ENCODE measurements at regions of chr1 and their contacts with region 1.

Region 1: GRCh38 chr1:160006312-160006940 is 25.4 kb downstream of the PIGM start:
- DNase-seq: peak; percentile 46 to 78
- H3K4me3 ChIP-seq: no peak overlapping the region
- H3K27ac ChIP-seq: no peak overlapping the region
- H3K4me1 ChIP-seq: no peaks in the 10 kb centered on the region
- H3K27me3 ChIP-seq: no peaks in the 10 kb centered on the region
- CTCF ChIP-seq: peak; percentile 94 to 97 (median 94)
- EP300 ChIP-seq: no peak
- POLR2A ChIP-seq: no peak
- RAD21 ChIP-seq: peak; percentile 84 to 87

Region 2: DNA sequence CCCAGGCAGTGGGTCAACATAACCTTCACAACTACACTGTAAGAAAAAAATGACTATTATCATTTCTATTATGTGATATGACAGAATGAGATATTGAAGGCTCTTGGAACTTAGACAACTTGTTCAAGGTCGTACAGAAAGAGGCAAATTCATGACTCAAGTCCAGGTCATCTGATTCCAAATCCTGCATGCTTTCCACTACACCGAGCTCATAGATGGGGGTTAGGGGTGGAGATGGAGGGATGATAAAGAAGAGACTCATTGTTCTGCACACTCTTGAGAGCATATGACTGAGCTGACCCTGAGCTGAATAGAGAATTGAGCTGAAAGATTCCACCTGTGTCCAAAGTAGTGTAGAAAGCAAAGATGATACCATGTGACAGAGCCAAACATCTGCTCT is 201.5 kb before region 1 on chr1:
- CTCF ChIA-PET with region 1: interaction called, 51 read pairs
- POLR2A ChIA-PET with region 1: no interaction called
- DNase-seq: no peak
- H3K4me3 ChIP-seq: no peak overlapping the region
- H3K27ac ChIP-seq: no peak overlapping the region
- H3K4me1 ChIP-seq: no peaks in the 10 kb centered on the region
- H3K27me3 ChIP-seq: no peaks in the 10 kb centered on the region
- CTCF ChIP-seq: no peak
- EP300 ChIP-seq: no peak
- POLR2A ChIP-seq: no peak
- RAD21 ChIP-seq: no peak

Region 3: GRCh38 chr1:159860426-159860825 is 146.0 kb before region 1 on chr1:
- CTCF ChIA-PET with region 1: interaction called, 10 read pairs
- POLR2A ChIA-PET with region 1: no interaction called
- DNase-seq: no peak
- H3K4me3 ChIP-seq: no peak overlapping the region
- H3K27ac ChIP-seq: no peak overlapping the region
- H3K4me1 ChIP-seq: peaks cover 0 to 2% (median 0%) of the 10 kb centered on the region in 4 experiments; a peak in 2 of 7 replicates
- H3K27me3 ChIP-seq: peaks cover 0 to 11% (median 8%) of the 10 kb centered on the region in 4 experiments; a peak in 6 of 7 replicates
- CTCF ChIP-seq: no peak
- EP300 ChIP-seq: no peak
- POLR2A ChIP-seq: no peak
- RAD21 ChIP-seq: no peak

Region 4: DNA sequence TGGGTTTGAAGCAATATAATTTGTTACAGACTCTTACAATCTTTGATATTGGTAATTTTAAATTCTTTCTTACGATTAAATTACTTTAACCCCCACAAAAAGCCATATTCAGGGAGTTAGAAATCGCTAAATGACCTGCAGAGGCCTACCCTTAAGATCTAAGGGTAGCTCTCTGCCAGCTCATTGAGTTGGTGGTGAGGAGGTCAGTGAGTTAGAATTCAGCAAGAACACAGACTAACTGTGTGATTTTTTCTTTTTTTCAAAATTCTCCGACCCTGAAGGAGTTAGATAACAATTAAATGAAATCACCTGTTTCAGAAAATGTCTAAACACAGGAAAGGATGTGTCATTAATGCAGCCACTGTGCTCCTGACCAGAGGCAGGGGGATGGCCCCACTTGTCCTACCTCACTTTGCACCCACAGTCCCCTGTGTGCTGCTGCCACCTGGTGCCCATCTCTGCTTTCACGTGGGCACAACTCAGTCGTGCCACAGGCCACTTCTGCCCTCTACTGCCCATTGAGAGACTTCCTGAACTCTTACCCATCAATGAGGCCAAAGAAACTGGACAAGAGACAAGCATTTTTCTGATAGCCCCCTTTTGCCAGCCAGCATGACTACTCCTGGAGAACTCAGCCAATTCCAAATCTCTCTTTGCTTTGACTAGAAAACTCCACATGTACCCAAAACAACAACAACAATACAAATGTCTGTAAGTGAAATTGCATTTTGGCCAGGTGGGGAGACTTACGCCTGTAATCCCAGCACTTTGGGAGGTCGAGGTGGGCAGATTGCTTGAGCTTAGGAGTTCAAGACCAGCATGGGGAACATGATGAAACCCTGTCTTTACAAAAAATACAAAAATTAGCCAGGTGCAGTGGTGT is 114.9 kb before region 1 on chr1:
- CTCF ChIA-PET with region 1: interaction called, 177 read pairs
- POLR2A ChIA-PET with region 1: no interaction called
- DNase-seq: peak; percentile 66 to 77
- H3K4me3 ChIP-seq: no peak overlapping the region
- H3K27ac ChIP-seq: no peak overlapping the region
- H3K4me1 ChIP-seq: no peaks in the 10 kb centered on the region
- H3K27me3 ChIP-seq: no peaks in the 10 kb centered on the region
- CTCF ChIP-seq: peak; percentile 99 to 100 (median 100)
- EP300 ChIP-seq: no peak
- POLR2A ChIP-seq: no peak
- RAD21 ChIP-seq: peak; percentile 100

Region 5: GRCh38 chr1:159936273-159936904 is 70.0 kb before region 1 on chr1:
- CTCF ChIA-PET with region 1: interaction called, 696 read pairs
- POLR2A ChIA-PET with region 1: interaction called, 41 read pairs
- DNase-seq: peak in 1 of 2 experiments; percentile 100
- H3K4me3 ChIP-seq: no peak overlapping the region
- H3K27ac ChIP-seq: no peak overlapping the region
- H3K4me1 ChIP-seq: peaks cover 0 to 12% (median 7%) of the 10 kb centered on the region in 4 experiments; a peak in 6 of 7 replicates
- H3K27me3 ChIP-seq: no peaks in the 10 kb centered on the region
- CTCF ChIP-seq: peak; percentile 97 to 99 (median 99)
- EP300 ChIP-seq: no peak
- POLR2A ChIP-seq: no peak
- RAD21 ChIP-seq: peak; percentile 98 to 99

Region 6: GRCh38 chr1:159983681-159984080 is 22.7 kb before region 1 on chr1:
- CTCF ChIA-PET with region 1: interaction called, 98 read pairs
- POLR2A ChIA-PET with region 1: no interaction called
- DNase-seq: peak in 1 of 2 experiments; percentile 35
- H3K4me3 ChIP-seq: no peak overlapping the region
- H3K27ac ChIP-seq: no peak overlapping the region
- H3K4me1 ChIP-seq: 0 out of 7 replicates have a peak, but pooled peaks cover 0 to 2% (median 0%) of the 10 kb centered on the region in 4 experiments
- H3K27me3 ChIP-seq: no peaks in the 10 kb centered on the region
- CTCF ChIP-seq: no peak
- EP300 ChIP-seq: no peak
- POLR2A ChIP-seq: no peak
- RAD21 ChIP-seq: no peak

Region 7: DNA sequence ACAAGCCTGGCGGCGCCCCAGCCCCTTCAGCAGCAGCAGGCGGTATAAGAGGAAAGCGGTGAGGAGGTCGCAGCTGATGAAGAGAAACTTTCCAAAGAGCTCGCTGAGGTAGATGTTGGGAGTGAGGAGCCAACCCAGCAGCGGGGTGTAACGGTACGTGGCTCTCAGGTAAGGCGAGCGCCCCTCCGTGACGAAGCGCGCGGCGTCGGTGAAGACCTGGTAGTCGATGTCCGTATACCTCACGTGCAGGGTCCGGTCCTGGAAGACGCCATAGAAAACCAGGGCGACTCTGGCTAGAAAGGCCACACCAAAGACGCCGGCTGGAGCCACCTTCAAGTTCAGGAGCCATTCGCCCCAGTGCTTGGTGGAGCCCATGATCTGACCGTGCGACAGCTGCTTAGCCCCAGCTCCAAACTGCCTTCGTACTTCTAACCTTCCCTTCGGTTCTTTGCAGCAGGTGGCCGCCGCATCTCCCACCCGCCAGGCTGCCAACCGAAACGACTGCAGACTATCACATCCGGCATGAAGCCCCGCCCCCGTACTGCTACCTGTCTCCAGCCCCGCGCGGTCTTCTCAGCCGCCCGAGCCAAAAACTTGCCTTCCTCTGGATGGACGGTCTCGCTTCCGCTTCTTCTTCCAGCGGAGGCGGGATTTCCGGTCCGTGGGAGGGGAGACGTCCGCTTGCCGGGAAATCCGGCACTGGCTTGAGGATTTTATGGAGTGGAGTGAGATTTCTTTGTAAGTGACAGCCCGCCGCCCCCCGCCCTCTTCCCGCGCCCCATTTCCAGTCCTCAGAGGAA is 25.1 kb after region 1 on chr1 and contains the start of gene PIGM:
- CTCF ChIA-PET with region 1: interaction called, 25 read pairs
- POLR2A ChIA-PET with region 1: interaction called, 3 read pairs
- DNase-seq: peak; percentile 91 to 95
- H3K4me3 ChIP-seq: peak within 1 kb of the TSS; percentile 72 to 88 (median 80)
- H3K27ac ChIP-seq: peak within 1 kb of the TSS; percentile 72
- H3K4me1 ChIP-seq: peaks cover 0 to 6% (median 2%) of the 10 kb centered on the region in 4 experiments; a peak in 5 of 7 replicates
- H3K27me3 ChIP-seq: no peaks in the 10 kb centered on the region; a peak in 2 of 7 replicates
- CTCF ChIP-seq: no peak
- EP300 ChIP-seq: peak in 1 of 2 experiments; percentile 63; a peak in 1 of 3 replicates
- POLR2A ChIP-seq: peak in 1 of 2 experiments; percentile 76; a peak in 2 of 3 replicates
- RAD21 ChIP-seq: no peak
- total RNA-seq, gene PIGM: 5.1 and 5.4 TPM in 2 replicates

Region 8: DNA sequence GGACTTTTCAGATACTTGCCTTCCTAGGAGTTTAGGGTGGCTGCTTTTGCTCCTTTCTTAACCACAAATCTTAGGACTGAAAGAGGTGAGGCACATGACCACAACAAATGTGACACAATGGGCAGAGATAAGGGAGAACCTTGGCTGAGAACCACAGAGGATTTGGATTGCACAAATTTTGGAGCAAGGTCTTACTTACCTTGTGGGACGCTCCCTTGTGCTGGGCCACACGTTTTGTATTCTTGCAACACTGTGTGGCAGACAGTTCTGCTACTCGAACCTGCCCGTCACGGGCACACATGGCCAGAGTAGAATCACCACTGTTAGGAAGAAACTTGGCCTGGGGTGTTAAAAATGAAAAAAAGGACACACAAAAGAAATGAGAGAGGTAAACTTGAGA is 232.0 kb after region 1 on chr1:
- CTCF ChIA-PET with region 1: no interaction called
- POLR2A ChIA-PET with region 1: no interaction called
- DNase-seq: no peak
- H3K4me3 ChIP-seq: no peak overlapping the region
- H3K27ac ChIP-seq: no peak overlapping the region
- H3K4me1 ChIP-seq: no peaks in the 10 kb centered on the region
- H3K27me3 ChIP-seq: no peaks in the 10 kb centered on the region
- CTCF ChIP-seq: no peak
- EP300 ChIP-seq: no peak
- POLR2A ChIP-seq: no peak
- RAD21 ChIP-seq: no peak

Measured in H1 (cell line).